ENCODE measurements at regions of chr6 and their contacts with region 1.

Region 1: GRCh38 chr6:134161036-134161435 is 108.6 kb upstream of the SLC2A12 start:
- DNase-seq: no peak
- H3K4me3 Mint-ChIP-seq: no peak overlapping the region
- H3K27ac Mint-ChIP-seq: no peak overlapping the region
- H3K4me1 Mint-ChIP-seq: no peaks in the 10 kb centered on the region
- H3K27me3 Mint-ChIP-seq: peaks cover 2% of the 10 kb centered on the region

Region 2: GRCh38 chr6:134082191-134082900 is 78.7 kb before region 1 on chr6:
- intact Hi-C with region 1: no loop called
- DNase-seq: no peak
- H3K4me3 Mint-ChIP-seq: no peak overlapping the region
- H3K27ac Mint-ChIP-seq: no peak overlapping the region
- H3K4me1 Mint-ChIP-seq: peaks cover 17% of the 10 kb centered on the region
- H3K27me3 Mint-ChIP-seq: peaks cover 12% of the 10 kb centered on the region

Region 3: GRCh38 chr6:134822920-134823709 is 662.1 kb after region 1 on chr6:
- intact Hi-C with region 1: loop called (anchors 2 kb)
- DNase-seq: no peak
- H3K4me3 Mint-ChIP-seq: no peak overlapping the region
- H3K27ac Mint-ChIP-seq: no peak overlapping the region
- H3K4me1 Mint-ChIP-seq: no peaks in the 10 kb centered on the region
- H3K27me3 Mint-ChIP-seq: no peaks in the 10 kb centered on the region

Region 4: GRCh38 chr6:134882426-134883038 is 721.5 kb after region 1 on chr6:
- intact Hi-C with region 1: loop called (anchors 1 kb)
- DNase-seq: peak; percentile 28
- H3K4me3 Mint-ChIP-seq: no peak overlapping the region
- H3K27ac Mint-ChIP-seq: no peak overlapping the region
- H3K4me1 Mint-ChIP-seq: no peaks in the 10 kb centered on the region
- H3K27me3 Mint-ChIP-seq: peaks cover 25% of the 10 kb centered on the region

Measured in activated T-helper 2 cell treated with anti-CD3 and anti-CD28 coated beads, Interferon-gamma antibody, Interleukin-2, Interleukin-4, amounts not matched to agents 10 μg/mL and 5 μg/mL and 100 μg/mL, durations not matched to agents 14 hours and 24 hours and 36 hours (primary cell).